ENCODE measurements at regions of chr2 and their contacts with region 1.

Region 1: GRCh38 chr2:195575879-195576401 is 81.1 kb upstream of the SLC39A10 start:
- DNase-seq: no peak
- ATAC-seq: peak; percentile 79
- H3K4me3 Mint-ChIP-seq: peak overlapping the region; percentile 70
- H3K27ac Mint-ChIP-seq: peak overlapping the region; percentile 76
- H3K4me1 Mint-ChIP-seq: peaks cover 50% of the 10 kb centered on the region
- H3K27me3 Mint-ChIP-seq: no peaks in the 10 kb centered on the region
- CTCF ChIP-seq: no peak

Region 2: DNA sequence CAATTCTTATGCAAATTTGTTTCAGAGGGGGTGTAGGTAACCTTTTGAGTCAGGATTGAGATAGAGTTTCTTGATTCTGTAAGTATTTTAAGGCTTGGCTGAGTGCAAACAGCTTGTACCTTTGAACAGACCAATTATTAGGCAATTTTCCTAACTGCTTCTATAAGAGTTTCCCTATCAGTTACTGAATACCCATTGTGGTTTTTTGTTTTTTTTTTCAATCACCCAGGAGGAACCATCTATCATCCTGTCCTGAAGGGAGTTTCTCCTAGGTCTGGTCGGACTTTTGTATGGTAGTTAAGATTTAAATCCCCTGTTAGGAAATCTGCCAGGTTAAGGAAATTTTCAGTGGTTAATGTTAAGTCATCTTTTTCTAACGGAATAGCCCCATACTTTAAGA is 238.3 kb before region 1 on chr2:
- CTCF ChIA-PET with region 1: no interaction called
- POLR2A ChIA-PET with region 1: no interaction called
- intact Hi-C with region 1: loop called (anchors 10 kb)
- DNase-seq: no peak
- ATAC-seq: no peak
- H3K4me3 Mint-ChIP-seq: no peak overlapping the region
- H3K27ac Mint-ChIP-seq: no peak overlapping the region
- H3K4me1 Mint-ChIP-seq: peaks cover 10% of the 10 kb centered on the region
- H3K27me3 Mint-ChIP-seq: peaks cover 4% of the 10 kb centered on the region
- CTCF ChIP-seq: no peak

Region 3: DNA sequence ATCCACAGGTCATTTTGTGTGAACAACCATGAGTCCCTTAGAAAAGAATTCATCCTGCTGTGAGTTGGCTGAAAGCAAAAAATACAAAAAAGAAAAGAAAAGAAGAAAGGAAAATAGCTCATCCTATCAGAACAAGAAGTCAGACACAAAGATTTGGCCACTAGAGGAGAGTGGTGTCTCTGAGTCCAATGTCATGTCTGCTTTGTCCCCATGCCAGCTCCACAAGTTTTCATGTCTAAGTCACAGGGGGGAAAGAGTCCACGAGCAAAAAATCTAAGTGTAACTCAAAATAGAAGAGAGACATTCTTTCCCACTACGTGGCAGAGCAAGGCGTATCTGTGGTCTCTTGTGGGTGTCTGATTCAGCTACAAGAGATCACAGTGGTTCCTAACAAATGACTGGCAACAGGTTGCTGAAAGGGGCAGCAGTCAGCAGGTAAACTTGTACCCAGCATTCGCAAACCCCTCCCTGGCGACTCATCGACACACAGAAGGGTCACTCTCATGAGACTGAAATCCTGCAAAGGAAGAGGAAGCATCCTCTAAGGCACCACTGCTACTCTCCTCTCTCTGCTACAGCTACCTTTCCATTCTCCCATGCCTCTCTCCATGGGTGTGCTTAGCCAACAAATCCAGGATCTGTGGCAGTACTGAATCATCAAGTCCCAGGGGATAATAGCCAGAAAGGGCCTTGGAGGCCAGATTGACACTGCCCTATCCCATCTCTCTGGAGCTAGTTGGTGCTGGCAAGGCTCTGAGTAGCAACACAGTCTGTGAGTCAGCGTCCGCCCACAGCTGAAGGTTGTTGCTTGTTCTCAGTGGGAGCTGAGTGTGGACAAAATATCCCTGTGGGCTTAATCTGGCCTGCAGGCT is 41.9 kb before region 1 on chr2:
- CTCF ChIA-PET with region 1: interaction called, 53 read pairs
- POLR2A ChIA-PET with region 1: interaction called, 6 read pairs
- intact Hi-C with region 1: loop called (anchors 5 kb)
- DNase-seq: peak; percentile 28
- ATAC-seq: peak; percentile 73
- H3K4me3 Mint-ChIP-seq: peak overlapping the region; percentile 66
- H3K27ac Mint-ChIP-seq: peak overlapping the region; percentile 97
- H3K4me1 Mint-ChIP-seq: peaks cover 72% of the 10 kb centered on the region
- H3K27me3 Mint-ChIP-seq: no peaks in the 10 kb centered on the region
- CTCF ChIP-seq: no peak

Region 4: GRCh38 chr2:195594248-195594647 is 18.3 kb after region 1 on chr2:
- CTCF ChIA-PET with region 1: interaction called, 7 read pairs
- POLR2A ChIA-PET with region 1: interaction called, 3 read pairs
- intact Hi-C with region 1: loop called (anchors 2 kb)
- DNase-seq: no peak
- ATAC-seq: no peak
- H3K4me3 Mint-ChIP-seq: no peak overlapping the region
- H3K27ac Mint-ChIP-seq: peak overlapping the region; percentile 9
- H3K4me1 Mint-ChIP-seq: peaks cover 29% of the 10 kb centered on the region
- H3K27me3 Mint-ChIP-seq: no peaks in the 10 kb centered on the region
- CTCF ChIP-seq: no peak

Region 5: GRCh38 chr2:195664528-195664927 is 88.6 kb after region 1 on chr2:
- CTCF ChIA-PET with region 1: interaction called, 221 read pairs
- POLR2A ChIA-PET with region 1: interaction called, 144 read pairs
- intact Hi-C with region 1: loop called (anchors 1 kb)
- DNase-seq: no peak
- ATAC-seq: no peak
- H3K4me3 Mint-ChIP-seq: no peak overlapping the region
- H3K27ac Mint-ChIP-seq: peak overlapping the region; percentile 66
- H3K4me1 Mint-ChIP-seq: peaks cover 60% of the 10 kb centered on the region
- H3K27me3 Mint-ChIP-seq: no peaks in the 10 kb centered on the region
- CTCF ChIP-seq: no peak